Uterus (tissue), 4 donors: ENCODE measurements at regions of chr11 and their contacts with region 1.

Region 1: DNA sequence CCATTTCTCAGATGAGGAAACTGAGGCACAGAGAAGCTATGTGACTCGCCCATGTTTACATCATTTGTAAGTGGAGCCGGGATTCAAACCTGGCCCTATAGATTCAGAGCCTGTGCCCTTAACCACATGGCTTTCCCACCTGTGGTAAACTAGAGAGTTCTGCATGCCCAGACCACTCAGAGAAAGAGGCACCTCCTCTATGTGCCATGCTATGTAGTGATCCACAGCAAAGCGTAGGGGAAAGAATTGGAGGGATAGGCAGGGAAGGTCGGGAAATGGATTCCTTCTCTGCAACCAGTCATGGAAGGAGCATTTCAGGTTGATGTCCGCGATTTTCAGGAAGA is 15.4 kb upstream of the POU2AF2 start:
- DNase-seq: no peak
- H3K4me3 ChIP-seq: peak overlapping the region in 1 of 2 donors; percentile 49
- H3K27ac ChIP-seq: no peak overlapping the region
- H3K4me1 ChIP-seq: no peaks in the 10 kb centered on the region
- H3K27me3 ChIP-seq: no peaks in the 10 kb centered on the region
- CTCF ChIP-seq: no peak
- POLR2A ChIP-seq: no peak

Region 2: DNA sequence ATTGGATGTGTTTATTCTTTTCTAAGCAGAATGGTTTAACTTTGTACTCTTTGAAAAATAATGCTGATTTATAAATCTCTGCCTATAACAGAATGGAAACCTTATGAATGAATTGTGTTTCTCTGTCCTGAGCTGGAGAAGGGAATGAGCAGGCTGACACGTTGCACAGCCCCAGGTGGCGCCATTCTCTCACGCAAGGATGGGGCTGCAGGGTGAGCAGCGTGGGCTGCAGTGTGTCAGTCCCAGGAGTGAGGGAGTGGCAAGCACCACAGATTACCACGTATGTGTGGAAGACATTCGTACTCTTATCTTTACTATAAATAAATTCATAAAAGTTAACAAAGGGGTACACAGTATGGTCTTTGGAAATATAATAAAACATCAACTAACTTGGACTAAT is 766.9 kb before region 1 on chr11:
- intact Hi-C with region 1: loop called (anchors 10 kb)
- DNase-seq: peak; percentile 31 to 56
- H3K4me3 ChIP-seq: no peak overlapping the region
- H3K27ac ChIP-seq: no peak overlapping the region
- H3K4me1 ChIP-seq: no peaks in the 10 kb centered on the region
- H3K27me3 ChIP-seq: no peaks in the 10 kb centered on the region
- CTCF ChIP-seq: peak; percentile 30 to 62 (median 39)
- POLR2A ChIP-seq: no peak